AG04449 (cell line): ENCODE measurements at regions of chr3 and their contacts with region 1.

Region 1: GRCh38 chr3:13525827-13526816 is 22.8 kb upstream of the FBLN2 start:
- DNase-seq: no peak
- H3K4me3 ChIP-seq: no peak overlapping the region
- CTCF ChIP-seq: no peak

Region 2: DNA sequence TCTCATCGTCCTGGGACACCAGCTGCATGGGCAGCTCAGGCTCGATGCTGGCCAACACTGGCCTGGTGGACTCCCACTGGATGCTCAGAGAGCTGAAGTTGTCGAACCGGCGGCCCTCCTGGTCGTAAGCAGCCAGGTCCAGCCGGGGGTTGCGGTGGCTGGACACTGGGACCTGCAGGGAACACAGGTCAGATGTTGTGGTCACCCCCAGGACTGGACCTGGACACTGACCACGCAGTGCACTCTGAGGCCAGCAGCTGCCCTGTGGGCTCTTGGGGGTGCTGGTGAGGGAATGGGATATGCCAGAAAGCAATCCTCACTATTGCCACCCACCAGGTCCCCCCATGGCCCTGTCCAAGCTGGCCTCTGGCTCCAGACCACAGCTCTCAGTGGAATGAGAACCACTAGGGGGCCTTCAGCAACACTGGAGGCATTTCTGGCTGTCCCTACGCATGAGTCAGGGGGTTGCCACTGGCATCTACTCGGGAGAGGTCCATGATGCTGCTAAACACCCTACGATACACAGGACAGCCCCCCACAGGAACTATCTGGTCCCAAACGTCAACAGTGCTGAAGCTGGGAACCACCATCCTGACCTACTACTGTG is 172.1 kb before region 1 on chr3:
- CTCF ChIA-PET with region 1: no interaction called
- POLR2A ChIA-PET with region 1: no interaction called
- DNase-seq: no peak
- H3K4me3 ChIP-seq: no peak overlapping the region
- CTCF ChIP-seq: peak; percentile 36

Region 3: DNA sequence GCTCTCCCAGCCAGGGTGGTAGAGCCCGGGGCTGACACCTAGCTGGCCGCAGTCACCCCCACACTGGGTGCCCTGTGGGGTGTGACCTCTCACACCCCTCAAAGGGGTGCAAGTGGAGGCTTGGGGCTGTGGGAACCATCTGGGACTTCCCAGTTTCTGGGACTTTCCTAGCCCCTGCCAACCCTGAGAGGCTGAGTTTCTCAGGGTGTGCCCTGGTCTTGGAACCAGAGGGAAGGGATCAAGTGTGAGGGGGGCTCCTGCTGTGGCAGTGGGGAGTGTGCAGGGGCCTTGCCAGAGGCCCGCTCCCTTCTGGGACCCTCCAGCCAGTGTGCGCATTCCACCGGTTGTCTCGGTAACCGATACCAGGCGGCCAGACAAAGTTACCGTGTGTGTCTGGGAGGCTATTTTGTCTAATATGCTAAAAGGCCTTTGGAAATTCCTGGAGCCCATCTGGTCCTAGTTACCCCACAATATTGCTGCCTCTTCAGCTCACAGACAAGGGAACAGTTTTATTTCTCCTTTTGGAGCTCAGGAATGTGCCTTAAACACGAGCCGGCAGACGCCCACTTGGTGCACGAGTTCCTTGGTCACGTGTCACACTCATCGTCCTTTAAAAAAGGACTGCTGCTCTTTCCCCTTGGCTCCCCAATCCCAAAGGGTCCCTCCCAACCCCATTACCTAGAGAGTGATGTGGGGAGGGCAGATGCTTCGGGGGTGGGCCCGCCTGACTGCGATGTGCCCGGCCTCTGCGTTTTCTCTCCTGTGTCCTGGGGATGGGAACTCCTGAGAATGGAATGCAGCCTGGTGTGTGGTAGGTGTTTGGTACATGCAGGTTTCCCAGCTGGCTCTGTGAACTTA is 12.8 kb before region 1 on chr3:
- CTCF ChIA-PET with region 1: interaction called, 11 read pairs
- POLR2A ChIA-PET with region 1: no interaction called
- DNase-seq: peak; percentile 28
- H3K4me3 ChIP-seq: no peak overlapping the region
- CTCF ChIP-seq: no peak